Upper lobe of right lung (tissue), 1 donor: ENCODE measurements at regions of chr19 and their contacts with region 1.

Region 1: GRCh38 chr19:2648528-2648937 is 54.0 kb downstream of the GNG7 start:
- DNase-seq: peak; percentile 87
- ATAC-seq: peak; percentile 98
- H3K4me3 ChIP-seq: no peak overlapping the region
- H3K27ac ChIP-seq: no peak overlapping the region
- H3K4me1 ChIP-seq: no peaks in the 10 kb centered on the region
- H3K27me3 ChIP-seq: no peaks in the 10 kb centered on the region
- CTCF ChIP-seq: peak; percentile 81

Region 2: GRCh38 chr19:2739602-2740313 is 91.2 kb after region 1 on chr19 and contains the start of gene SLC39A3:
- intact Hi-C with region 1: loop called (anchors 5 kb)
- DNase-seq: peak; percentile 97
- ATAC-seq: peak; percentile 100
- H3K4me3 ChIP-seq: peak within 1 kb of the TSS; percentile 98
- H3K27ac ChIP-seq: peak within 1 kb of the TSS; percentile 74
- H3K4me1 ChIP-seq: no peaks in the 10 kb centered on the region
- H3K27me3 ChIP-seq: no peaks in the 10 kb centered on the region
- CTCF ChIP-seq: peak; percentile 24
- total RNA-seq, gene SLC39A3: 26.7 TPM

Region 3: GRCh38 chr19:2768365-2769132 is 120.0 kb after region 1 on chr19:
- intact Hi-C with region 1: loop called (anchors 10 kb)
- DNase-seq: no peak
- ATAC-seq: peak; percentile 6
- H3K4me3 ChIP-seq: no peak overlapping the region
- H3K27ac ChIP-seq: no peak overlapping the region
- H3K4me1 ChIP-seq: peaks cover 8% of the 10 kb centered on the region
- H3K27me3 ChIP-seq: no peaks in the 10 kb centered on the region
- CTCF ChIP-seq: no peak